Aorta (tissue), 5 donors: ENCODE measurements at regions of chr20 and their contacts with region 1.

Region 1: GRCh38 chr20:52083627-52084232 is 107.8 kb downstream of the ZFP64 start:
- DNase-seq: peak in 1 of 2 donors; percentile 56
- ATAC-seq: peak; percentile 56
- H3K4me3 ChIP-seq: no peak overlapping the region
- H3K27ac ChIP-seq: no peak overlapping the region
- H3K4me1 ChIP-seq: no peaks in the 10 kb centered on the region
- H3K27me3 ChIP-seq: no peaks in the 10 kb centered on the region

Region 2: DNA sequence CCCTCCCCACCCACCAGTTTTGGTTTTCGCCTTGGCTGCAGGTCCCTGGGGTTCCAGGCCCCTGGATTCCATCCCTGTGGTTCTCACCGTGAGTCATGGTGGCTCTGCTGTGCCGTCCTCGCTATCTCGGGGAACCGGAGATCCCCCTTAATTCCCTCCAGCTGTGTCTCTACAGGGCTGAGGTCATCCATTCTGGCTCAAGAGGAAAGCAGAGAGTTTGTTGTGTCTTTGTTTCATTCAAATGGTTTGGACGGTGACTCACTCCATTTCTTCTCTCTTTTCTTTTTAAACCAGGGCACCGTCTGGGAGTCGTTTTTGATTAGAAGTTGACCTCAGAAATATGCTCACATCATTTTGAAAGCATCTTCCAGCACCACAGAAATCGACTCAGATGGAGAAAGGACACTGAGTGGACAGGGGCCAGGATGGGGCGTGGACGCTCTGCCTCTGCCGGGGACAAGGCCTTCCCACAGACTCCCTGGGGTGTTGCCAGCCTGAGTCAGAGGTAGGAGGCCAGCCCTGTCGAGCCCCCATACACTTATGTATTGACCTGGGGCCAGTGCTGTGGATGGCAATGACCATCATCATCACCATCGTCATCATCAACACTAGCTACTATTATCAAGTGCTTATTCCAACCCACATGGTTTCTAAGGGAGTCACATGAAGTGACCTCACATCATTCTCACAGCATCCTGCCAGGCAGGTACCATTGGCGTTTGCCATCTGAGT is 717.4 kb before region 1 on chr20:
- intact Hi-C with region 1: loop called in 1 of 2 experiments (anchors 10 kb)
- DNase-seq: peak; percentile 91 to 95
- ATAC-seq: peak; percentile 72
- H3K4me3 ChIP-seq: no peak overlapping the region
- H3K27ac ChIP-seq: peak overlapping the region; percentile 7 to 31
- H3K4me1 ChIP-seq: no peaks in the 10 kb centered on the region
- H3K27me3 ChIP-seq: no peaks in the 10 kb centered on the region

Region 3: GRCh38 chr20:51639206-51639832 is 444.4 kb before region 1 on chr20:
- intact Hi-C with region 1: loop called (anchors 5 kb)
- DNase-seq: peak; percentile 73 to 89
- ATAC-seq: peak; percentile 68
- H3K4me3 ChIP-seq: no peak overlapping the region
- H3K27ac ChIP-seq: no peak overlapping the region
- H3K4me1 ChIP-seq: no peaks in the 10 kb centered on the region
- H3K27me3 ChIP-seq: no peaks in the 10 kb centered on the region

Region 4: DNA sequence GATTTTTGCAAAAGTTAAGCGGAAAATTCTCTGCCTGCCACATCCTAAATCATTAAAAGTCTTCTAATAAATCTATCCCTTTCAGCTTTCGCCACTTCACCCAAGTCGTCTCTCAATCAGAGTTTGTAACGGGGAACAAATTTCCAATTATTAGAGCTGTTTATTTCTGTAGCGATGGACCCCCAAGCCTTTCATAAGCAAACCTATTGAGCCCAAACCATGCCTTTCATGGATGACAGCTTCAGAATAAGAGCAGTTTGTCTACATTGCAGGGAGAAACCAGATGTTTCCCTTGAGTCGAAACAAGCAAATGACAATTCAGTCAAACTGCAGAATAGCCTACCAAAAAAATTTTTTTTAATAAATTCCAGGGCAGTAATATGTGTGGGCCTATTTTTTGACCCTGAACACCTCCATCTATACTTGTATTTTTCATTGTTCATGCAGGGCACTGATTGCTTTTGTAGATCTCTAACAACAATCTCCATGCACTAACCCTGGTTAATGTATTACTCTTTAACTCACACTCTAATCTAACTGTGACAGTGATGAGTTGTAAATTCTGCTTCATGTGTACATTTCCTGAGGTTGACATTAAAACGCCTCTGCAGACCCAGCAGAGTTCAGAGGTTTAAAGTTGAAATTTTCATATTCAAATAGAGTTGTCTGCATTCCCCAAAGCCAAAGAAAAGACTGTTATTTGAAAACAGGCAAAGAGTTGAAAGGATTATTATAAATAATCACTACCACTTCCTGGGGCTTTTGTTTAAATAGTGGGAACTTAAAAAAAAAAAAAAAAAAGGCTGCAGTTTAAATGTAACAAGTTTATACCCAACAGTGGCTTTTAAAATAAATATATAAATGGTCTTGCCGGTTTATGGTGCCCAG is 380.1 kb before region 1 on chr20:
- intact Hi-C with region 1: loop called in 1 of 2 experiments (anchors 5 kb)
- DNase-seq: no peak
- ATAC-seq: no peak
- H3K4me3 ChIP-seq: no peak overlapping the region
- H3K27ac ChIP-seq: no peak overlapping the region
- H3K4me1 ChIP-seq: no peaks in the 10 kb centered on the region
- H3K27me3 ChIP-seq: no peaks in the 10 kb centered on the region

Region 5: DNA sequence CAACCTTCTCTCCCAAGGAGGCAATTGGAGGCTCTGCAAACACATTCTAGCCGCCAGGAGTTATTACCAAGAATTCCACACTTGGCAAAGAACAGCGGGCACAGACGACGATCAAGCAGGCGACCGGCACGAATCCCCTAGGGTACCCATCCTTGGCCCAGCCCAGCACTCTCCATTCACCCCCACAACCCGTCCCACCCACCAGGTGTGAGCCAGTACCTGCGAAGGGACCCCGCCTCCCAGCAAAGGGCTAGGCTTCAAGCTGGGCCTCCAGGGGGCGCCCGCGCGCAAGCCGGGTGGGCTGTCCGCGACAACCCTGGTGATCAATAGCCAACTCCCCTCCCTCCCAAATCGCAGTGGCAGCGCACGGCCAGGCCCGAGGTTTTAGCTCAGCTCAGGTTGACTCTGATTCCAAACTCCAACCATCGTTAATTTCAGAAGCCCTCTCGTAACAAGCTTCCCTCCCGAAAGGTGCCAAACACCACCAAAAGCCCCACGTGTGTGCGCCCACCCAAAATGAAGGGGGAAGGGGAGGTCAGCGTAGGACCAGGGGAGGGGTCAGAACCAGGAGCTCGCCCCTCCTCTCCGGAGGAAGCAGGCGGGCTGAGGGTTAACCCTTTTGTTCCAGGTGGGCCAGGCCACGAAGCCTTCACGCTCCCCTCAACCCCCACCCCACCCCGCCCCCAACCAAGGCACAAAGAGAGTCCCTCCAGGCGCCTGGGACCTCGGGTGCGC is 283.5 kb before region 1 on chr20:
- intact Hi-C with region 1: loop called in 1 of 2 experiments (anchors 10 kb)
- DNase-seq: peak in 1 of 2 donors; percentile 85
- ATAC-seq: peak; percentile 72
- H3K4me3 ChIP-seq: peak overlapping the region in 1 of 2 donors; percentile 11
- H3K27ac ChIP-seq: no peak overlapping the region
- H3K4me1 ChIP-seq: no peaks in the 10 kb centered on the region
- H3K27me3 ChIP-seq: no peaks in the 10 kb centered on the region

Region 6: DNA sequence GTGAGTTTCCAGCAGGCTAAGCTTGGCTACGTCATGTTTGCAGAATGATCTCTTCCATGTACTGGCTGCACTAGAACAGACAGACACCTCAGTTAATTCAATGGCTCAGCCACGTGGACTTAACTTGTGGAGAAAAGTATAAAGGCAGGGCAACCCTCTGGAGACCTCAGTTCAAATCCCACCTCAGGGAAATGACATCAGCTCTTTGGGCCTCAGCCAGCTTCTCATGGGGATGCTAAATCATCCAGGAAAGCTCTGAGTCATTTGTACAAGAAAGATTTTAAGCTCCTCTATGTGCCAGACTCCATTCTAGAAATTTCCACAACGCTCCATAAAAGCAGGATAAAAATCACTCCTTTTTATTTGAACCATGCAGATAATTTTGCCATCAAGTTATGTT is 153.0 kb before region 1 on chr20:
- intact Hi-C with region 1: no loop called
- DNase-seq: peak in 1 of 2 donors; percentile 50
- ATAC-seq: no peak
- H3K4me3 ChIP-seq: no peak overlapping the region
- H3K27ac ChIP-seq: no peak overlapping the region
- H3K4me1 ChIP-seq: peaks cover 0 to 2% of the 10 kb centered on the region in 2 donors
- H3K27me3 ChIP-seq: no peaks in the 10 kb centered on the region

Region 7: GRCh38 chr20:52001999-52002666 is 81.6 kb before region 1 on chr20:
- intact Hi-C with region 1: no loop called
- DNase-seq: no peak
- ATAC-seq: no peak
- H3K4me3 ChIP-seq: no peak overlapping the region
- H3K27ac ChIP-seq: no peak overlapping the region
- H3K4me1 ChIP-seq: no peaks in the 10 kb centered on the region
- H3K27me3 ChIP-seq: no peaks in the 10 kb centered on the region